MCF 10A (cell line): ENCODE measurements at regions of chr18 and their contacts with region 1.

Region 1: GRCh38 chr18:24543805-24544498 is 83.5 kb downstream of the HRH4 start:
- DNase-seq: peak; percentile 61
- H3K4me3 Mint-ChIP-seq: no peak overlapping the region
- H3K27ac Mint-ChIP-seq: no peak overlapping the region
- H3K4me1 Mint-ChIP-seq: no peaks in the 10 kb centered on the region
- H3K27me3 Mint-ChIP-seq: no peaks in the 10 kb centered on the region
- CTCF ChIP-seq: peak; percentile 46

Region 2: DNA sequence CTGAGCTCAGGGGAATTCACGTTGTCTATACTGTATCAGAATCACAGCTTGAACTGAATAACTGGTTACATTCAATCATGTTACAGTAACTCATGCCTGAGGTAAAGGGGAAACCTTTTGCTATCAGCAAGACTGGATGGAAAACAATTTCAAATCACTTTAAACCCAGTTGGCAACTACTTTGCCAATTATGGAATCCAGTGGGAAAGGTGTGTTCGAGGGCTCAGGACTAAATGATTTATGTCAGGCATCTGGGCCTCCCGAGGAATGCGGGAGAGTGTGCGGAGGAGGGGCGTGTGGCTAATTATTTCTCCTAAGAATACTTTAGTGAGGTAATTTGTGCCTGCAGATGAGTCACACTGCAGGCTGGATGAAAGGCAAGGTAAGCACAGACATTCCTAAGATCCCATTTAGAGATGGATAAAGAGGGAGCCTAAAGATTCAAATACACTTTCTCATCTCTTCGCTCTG is 16.6 kb after region 1 on chr18:
- CTCF ChIA-PET with region 1: interaction called, 24 read pairs
- POLR2A ChIA-PET with region 1: no interaction called
- intact Hi-C with region 1: no loop called
- DNase-seq: peak; percentile 61
- H3K4me3 Mint-ChIP-seq: no peak overlapping the region
- H3K27ac Mint-ChIP-seq: no peak overlapping the region
- H3K4me1 Mint-ChIP-seq: peaks cover 9% of the 10 kb centered on the region
- H3K27me3 Mint-ChIP-seq: no peaks in the 10 kb centered on the region
- CTCF ChIP-seq: no peak

Region 3: DNA sequence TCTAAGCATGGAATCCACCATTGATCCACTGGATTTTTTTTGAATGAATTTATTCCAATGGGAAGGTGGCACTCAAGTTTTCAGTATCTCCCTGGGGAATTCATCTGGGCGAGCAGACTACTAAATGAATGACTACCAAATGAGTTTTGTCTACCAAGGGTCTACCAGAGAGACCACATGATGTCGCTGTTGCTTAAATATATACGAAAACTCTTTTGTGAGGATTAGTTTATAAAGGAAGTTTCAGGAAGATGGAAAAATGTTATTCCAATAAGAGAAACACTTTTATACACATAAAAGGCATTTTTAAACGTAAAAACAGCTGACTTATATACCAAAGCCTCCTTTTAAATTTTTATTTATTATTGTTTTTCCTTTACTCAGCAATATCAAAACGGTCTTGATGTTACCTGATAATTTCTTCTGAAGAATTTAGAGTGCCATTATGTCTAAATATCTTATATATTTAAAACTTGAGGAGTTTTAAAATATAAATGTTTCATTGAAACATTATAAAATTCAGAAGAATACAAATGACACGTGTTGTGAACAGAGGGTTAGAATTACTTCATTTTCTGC is 56.2 kb after region 1 on chr18:
- CTCF ChIA-PET with region 1: interaction called, 10 read pairs
- POLR2A ChIA-PET with region 1: no interaction called
- intact Hi-C with region 1: loop called (anchors 5 kb)
- DNase-seq: peak; percentile 65
- H3K4me3 Mint-ChIP-seq: no peak overlapping the region
- H3K27ac Mint-ChIP-seq: no peak overlapping the region
- H3K4me1 Mint-ChIP-seq: no peaks in the 10 kb centered on the region
- H3K27me3 Mint-ChIP-seq: peaks cover 37% of the 10 kb centered on the region
- CTCF ChIP-seq: peak; percentile 58

Region 4: GRCh38 chr18:24616653-24617052 is 72.7 kb after region 1 on chr18:
- CTCF ChIA-PET with region 1: no interaction called
- POLR2A ChIA-PET with region 1: no interaction called
- intact Hi-C with region 1: no loop called
- DNase-seq: no peak
- H3K4me3 Mint-ChIP-seq: no peak overlapping the region
- H3K27ac Mint-ChIP-seq: no peak overlapping the region
- H3K4me1 Mint-ChIP-seq: no peaks in the 10 kb centered on the region
- H3K27me3 Mint-ChIP-seq: no peaks in the 10 kb centered on the region
- CTCF ChIP-seq: no peak

Region 5: GRCh38 chr18:24726727-24727492 is 183.0 kb after region 1 on chr18:
- CTCF ChIA-PET with region 1: interaction called, 215 read pairs
- POLR2A ChIA-PET with region 1: interaction called, 3 read pairs
- intact Hi-C with region 1: loop called (anchors 1 kb)
- DNase-seq: peak; percentile 76
- H3K4me3 Mint-ChIP-seq: no peak overlapping the region
- H3K27ac Mint-ChIP-seq: no peak overlapping the region
- H3K4me1 Mint-ChIP-seq: no peaks in the 10 kb centered on the region
- H3K27me3 Mint-ChIP-seq: peaks cover 46% of the 10 kb centered on the region
- CTCF ChIP-seq: peak; percentile 75

Region 6: GRCh38 chr18:25832001-25832604 is 1288.2 kb after region 1 on chr18:
- CTCF ChIA-PET with region 1: no interaction called
- POLR2A ChIA-PET with region 1: no interaction called
- intact Hi-C with region 1: loop called (anchors 1 kb)
- DNase-seq: peak; percentile 57
- H3K4me3 Mint-ChIP-seq: no peak overlapping the region
- H3K27ac Mint-ChIP-seq: no peak overlapping the region
- H3K4me1 Mint-ChIP-seq: peaks cover 12% of the 10 kb centered on the region
- H3K27me3 Mint-ChIP-seq: no peaks in the 10 kb centered on the region
- CTCF ChIP-seq: peak; percentile 76